Heart left ventricle (tissue), 16 donors: ENCODE measurements at regions of chr9 and their contacts with region 1.

Region 1: DNA sequence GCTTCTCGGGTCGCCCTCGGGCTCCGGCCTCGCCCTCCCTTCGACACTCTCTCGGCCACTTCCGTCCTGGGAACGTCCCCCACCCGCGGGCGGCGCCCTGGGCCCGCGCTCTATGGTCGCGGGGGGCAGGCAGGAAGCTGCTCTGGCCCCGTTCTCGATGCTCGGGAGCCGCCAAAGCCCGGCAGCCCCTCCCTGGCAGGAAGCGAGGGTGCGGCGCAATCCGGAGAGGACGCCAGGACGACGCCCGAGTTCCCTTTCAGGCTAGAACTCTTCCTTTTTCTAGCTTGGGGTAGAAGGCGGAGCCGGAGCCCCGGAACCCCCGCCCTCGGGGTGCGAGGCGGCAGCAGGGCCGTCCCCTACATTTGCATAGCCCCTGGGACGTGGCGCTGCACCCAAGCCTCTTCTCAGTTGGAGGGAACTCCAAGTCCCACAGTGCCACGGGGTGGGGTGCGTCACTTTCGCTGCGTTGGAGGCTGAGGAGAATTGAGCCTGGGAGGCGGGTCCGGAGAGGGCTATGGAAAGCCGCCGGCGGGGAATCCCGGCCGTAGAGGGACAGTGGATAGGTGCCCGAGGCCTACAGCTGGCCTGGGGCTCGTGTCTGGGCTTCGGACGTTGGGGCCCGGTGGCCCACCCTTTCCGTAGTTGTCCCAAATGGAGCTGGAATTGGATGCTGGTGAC is at the starts of genes CREB3 and TLN1:
- DNase-seq: peak; percentile 98 to 99 (median 99)
- ATAC-seq: peak; percentile 87 to 93 (median 91)
- H3K4me3 ChIP-seq: peak within 1 kb of the TSS; percentile 63 to 98 (median 86)
- H3K27ac ChIP-seq: peak within 1 kb of the TSS; percentile 94 to 99 (median 98)
- H3K4me1 ChIP-seq: peaks cover 12 to 71% (median 53%) of the 10 kb centered on the region in 12 donors
- H3K27me3 ChIP-seq: no peaks in the 10 kb centered on the region
- CTCF ChIP-seq: peak in 3 of 12 donors; percentile 6 to 28 (median 16)
- POLR2A ChIP-seq: peak in 1 of 2 donors; percentile 83
- total RNA-seq, gene CREB3: 16.1 to 38.0 (median 25.5) TPM
- total RNA-seq, gene TLN1: 193 to 373 (median 261) TPM

Region 2: GRCh38 chr9:35111001-35111933 is 621.0 kb before region 1 on chr9:
- intact Hi-C with region 1: loop called in 1 of 10 experiments (anchors 5 kb)
- DNase-seq: peak; percentile 98 to 99 (median 99)
- ATAC-seq: peak; percentile 75 to 87 (median 80)
- H3K4me3 ChIP-seq: peak overlapping the region; percentile 62 to 96 (median 88)
- H3K27ac ChIP-seq: peak overlapping the region; percentile 62 to 98 (median 92)
- H3K4me1 ChIP-seq: peaks cover 3 to 56% (median 46%) of the 10 kb centered on the region in 12 donors
- H3K27me3 ChIP-seq: no peaks in the 10 kb centered on the region
- CTCF ChIP-seq: no peak
- POLR2A ChIP-seq: peak; percentile 39 to 87

Region 3: GRCh38 chr9:35193762-35194161 is 538.5 kb before region 1 on chr9:
- intact Hi-C with region 1: no loop called
- DNase-seq: no peak
- ATAC-seq: no peak
- H3K4me3 ChIP-seq: no peak overlapping the region
- H3K27ac ChIP-seq: no peak overlapping the region
- H3K4me1 ChIP-seq: peaks cover 0 to 4% (median 0%) of the 10 kb centered on the region in 12 donors
- H3K27me3 ChIP-seq: no peaks in the 10 kb centered on the region
- CTCF ChIP-seq: peak in 3 of 12 donors; percentile 10 to 17 (median 12)
- POLR2A ChIP-seq: no peak

Region 4: GRCh38 chr9:35646533-35647265 is 85.6 kb before region 1 on chr9:
- intact Hi-C with region 1: loop called in 2 of 10 experiments (anchors 5 kb)
- DNase-seq: peak; percentile 93 to 97 (median 93)
- ATAC-seq: peak; percentile 83 to 97 (median 96)
- H3K4me3 ChIP-seq: peak overlapping the region; percentile 41 to 77 (median 64)
- H3K27ac ChIP-seq: peak overlapping the region; percentile 54 to 89 (median 81)
- H3K4me1 ChIP-seq: peaks cover 0 to 63% (median 9%) of the 10 kb centered on the region in 12 donors
- H3K27me3 ChIP-seq: no peaks in the 10 kb centered on the region
- CTCF ChIP-seq: peak; percentile 92 to 99 (median 96)
- POLR2A ChIP-seq: peak in 1 of 2 donors; percentile 85

Region 5: DNA sequence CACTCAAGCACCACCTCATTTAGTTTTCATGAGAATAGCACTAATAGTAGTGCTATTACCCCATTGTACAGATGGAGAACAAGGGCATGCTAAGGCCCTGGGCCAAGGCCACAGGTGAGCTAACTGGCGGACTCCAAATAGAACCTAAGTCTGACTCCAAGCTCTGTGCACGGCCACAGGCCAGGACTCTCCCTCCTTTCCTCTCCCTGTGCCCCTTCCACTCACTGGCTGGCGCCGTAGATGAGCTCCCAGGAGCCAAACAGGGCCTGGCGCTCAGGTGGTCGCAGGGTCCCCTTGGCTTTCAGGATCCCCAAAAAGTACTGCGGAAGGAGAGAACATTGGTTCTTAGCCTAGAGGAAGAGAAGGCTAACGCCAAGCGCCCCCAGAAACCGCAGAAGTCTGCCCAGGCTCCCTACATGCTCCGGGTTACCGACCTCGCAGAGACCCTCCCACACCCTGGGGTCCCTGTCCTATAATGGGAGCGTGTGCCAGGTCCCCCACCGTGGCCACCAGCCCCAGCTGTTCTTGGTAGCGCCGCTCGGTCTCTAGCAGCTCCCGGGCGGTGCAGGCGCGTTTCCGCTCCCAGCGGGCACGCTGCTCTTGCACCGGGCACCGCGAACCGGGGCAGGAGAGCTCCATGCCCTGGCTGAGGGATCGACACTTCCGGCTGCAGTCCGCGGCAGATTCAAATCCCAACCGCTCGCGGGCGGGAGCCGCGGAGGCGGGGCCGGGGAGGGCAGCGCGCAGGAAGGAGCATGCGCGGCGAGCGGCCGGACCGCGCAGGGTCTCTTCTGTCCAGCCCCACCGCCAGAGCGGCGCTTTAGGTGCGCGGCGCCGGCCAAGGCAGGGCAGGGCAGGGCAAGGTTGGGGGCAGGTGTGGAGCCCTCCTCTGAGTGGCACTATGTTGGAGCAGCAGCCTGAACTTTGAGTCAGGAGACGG is 67.5 kb before region 1 on chr9 and contains the start of gene ARHGEF39:
- intact Hi-C with region 1: loop called in 4 of 10 experiments (anchors 5 kb)
- DNase-seq: peak; percentile 78 to 92 (median 86)
- ATAC-seq: peak; percentile 53 to 89 (median 84)
- H3K4me3 ChIP-seq: peak within 1 kb of the TSS; percentile 37 to 65 (median 56)
- H3K27ac ChIP-seq: peak within 1 kb of the TSS in 11 of 12 donors; percentile 14 to 99 (median 61)
- H3K4me1 ChIP-seq: peaks cover 0 to 50% (median 27%) of the 10 kb centered on the region in 12 donors
- H3K27me3 ChIP-seq: no peaks in the 10 kb centered on the region
- CTCF ChIP-seq: peak in 7 of 12 donors; percentile 7 to 41 (median 17)
- POLR2A ChIP-seq: peak in 1 of 2 donors; percentile 44
- total RNA-seq, gene ARHGEF39: 0.11 to 1.2 (median 0.27) TPM

Region 6: DNA sequence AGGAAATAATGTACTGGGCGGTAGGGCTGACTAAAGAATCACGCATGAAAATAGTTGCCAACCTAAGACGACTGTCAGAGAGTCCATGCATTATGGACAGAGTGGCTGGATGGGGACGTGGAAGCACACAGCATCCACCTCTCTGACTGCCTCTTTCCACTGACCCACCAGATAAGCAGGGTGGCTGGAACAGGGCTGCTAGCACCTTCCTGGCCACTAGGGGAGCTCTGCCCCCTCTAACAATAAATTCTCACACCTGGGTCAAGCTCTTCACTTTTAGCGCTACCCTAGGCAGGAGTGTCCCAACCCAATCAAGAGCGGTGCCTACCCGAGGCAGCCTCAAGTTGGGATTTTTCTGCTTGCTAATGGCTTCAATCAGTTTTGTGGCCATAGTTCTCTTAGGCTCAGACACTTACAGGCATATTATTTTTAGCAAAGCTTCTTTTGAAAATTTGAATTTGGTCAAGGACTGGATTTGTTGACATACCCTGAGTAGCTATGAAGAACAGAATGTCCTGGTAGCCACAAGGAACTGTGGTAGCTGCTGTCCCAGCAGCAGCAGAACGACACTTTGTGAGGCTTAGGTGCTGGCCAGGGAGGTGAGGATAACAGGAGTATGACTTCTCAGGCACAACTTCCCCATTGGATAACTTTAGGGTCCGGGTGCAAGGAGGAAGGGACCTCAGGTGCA is 35.6 kb before region 1 on chr9:
- intact Hi-C with region 1: loop called in 5 of 10 experiments (anchors 5 kb)
- DNase-seq: peak in 4 of 5 donors; percentile 44 to 59 (median 54)
- ATAC-seq: peak; percentile 49 to 75 (median 73)
- H3K4me3 ChIP-seq: no peak overlapping the region
- H3K27ac ChIP-seq: peak overlapping the region in 4 of 12 donors; percentile 14 to 98 (median 24)
- H3K4me1 ChIP-seq: peaks cover 0 to 13% (median 5%) of the 10 kb centered on the region in 12 donors
- H3K27me3 ChIP-seq: no peaks in the 10 kb centered on the region
- CTCF ChIP-seq: peak; percentile 82 to 94 (median 88)
- POLR2A ChIP-seq: no peak

Region 7: DNA sequence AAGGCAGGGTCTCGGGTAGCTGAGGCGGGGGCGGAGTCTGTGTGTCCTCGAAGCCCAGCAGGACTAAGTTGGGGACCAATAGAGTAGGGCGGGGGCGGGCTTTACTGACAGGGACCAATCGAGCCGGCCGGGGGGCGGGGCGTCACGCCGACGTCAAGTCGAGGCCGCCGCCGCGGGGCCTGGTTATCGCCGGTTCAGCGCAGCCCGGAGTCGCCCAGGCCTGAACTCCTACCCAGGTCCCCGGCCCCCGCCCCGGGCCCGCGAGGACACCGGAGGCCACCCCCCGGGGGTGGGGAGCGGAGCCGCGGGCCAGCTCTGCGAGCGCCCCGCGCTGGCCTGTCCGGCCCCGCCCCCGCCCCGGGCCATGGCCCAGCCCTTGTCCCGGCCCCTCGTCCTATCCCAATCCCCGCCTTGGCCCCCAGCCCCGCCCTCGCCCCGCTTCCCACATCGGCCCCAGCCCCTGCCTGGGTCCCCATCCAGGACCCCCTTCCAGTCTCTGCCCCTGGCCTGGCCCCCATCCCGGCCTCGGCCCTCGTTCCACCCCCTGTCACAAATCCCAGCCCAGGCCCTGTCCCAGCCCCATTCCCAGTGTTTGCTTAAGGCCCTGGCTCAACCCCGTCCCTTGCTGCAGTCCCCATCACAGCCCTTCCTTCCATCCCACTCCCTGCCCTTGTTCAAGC is 97.0 kb after region 1 on chr9 and contains the start of gene TMEM8B:
- intact Hi-C with region 1: loop called in 1 of 10 experiments (anchors 5 kb)
- DNase-seq: peak; percentile 97 to 99 (median 98)
- ATAC-seq: peak; percentile 89 to 95 (median 92)
- H3K4me3 ChIP-seq: peak within 1 kb of the TSS; percentile 65 to 97 (median 78)
- H3K27ac ChIP-seq: peak within 1 kb of the TSS; percentile 85 to 99 (median 94)
- H3K4me1 ChIP-seq: peaks cover 3 to 53% (median 39%) of the 10 kb centered on the region in 12 donors
- H3K27me3 ChIP-seq: no peaks in the 10 kb centered on the region
- CTCF ChIP-seq: no peak
- POLR2A ChIP-seq: peak in 1 of 2 donors; percentile 57
- total RNA-seq, gene TMEM8B: 10.8 to 21.4 (median 18.2) TPM

Region 8: GRCh38 chr9:36074870-36075532 is 342.7 kb after region 1 on chr9:
- intact Hi-C with region 1: no loop called
- DNase-seq: peak in 4 of 5 donors; percentile 85 to 89 (median 86)
- ATAC-seq: peak; percentile 91 to 97 (median 94)
- H3K4me3 ChIP-seq: no peak overlapping the region
- H3K27ac ChIP-seq: peak overlapping the region in 8 of 12 donors; percentile 1 to 66 (median 48)
- H3K4me1 ChIP-seq: peaks cover 2 to 22% (median 11%) of the 10 kb centered on the region in 12 donors
- H3K27me3 ChIP-seq: no peaks in the 10 kb centered on the region
- CTCF ChIP-seq: no peak
- POLR2A ChIP-seq: no peak